ENCODE measurements at regions of chr1 and their contacts with region 1.

Region 1: GRCh38 chr1:228393248-228393699 is 13.4 kb downstream of the TRIM11 start:
- H3K4me3 Mint-ChIP-seq: no peak overlapping the region
- H3K27ac Mint-ChIP-seq: no peak overlapping the region
- H3K4me1 Mint-ChIP-seq: no peaks in the 10 kb centered on the region
- H3K27me3 Mint-ChIP-seq: no peaks in the 10 kb centered on the region

Region 2: GRCh38 chr1:228131766-228132165 is 261.5 kb before region 1 on chr1:
- intact Hi-C with region 1: loop called (anchors 5 kb)
- H3K4me3 Mint-ChIP-seq: no peak overlapping the region
- H3K27ac Mint-ChIP-seq: no peak overlapping the region
- H3K4me1 Mint-ChIP-seq: peaks cover 6% of the 10 kb centered on the region
- H3K27me3 Mint-ChIP-seq: peaks cover 3% of the 10 kb centered on the region

Region 3: DNA sequence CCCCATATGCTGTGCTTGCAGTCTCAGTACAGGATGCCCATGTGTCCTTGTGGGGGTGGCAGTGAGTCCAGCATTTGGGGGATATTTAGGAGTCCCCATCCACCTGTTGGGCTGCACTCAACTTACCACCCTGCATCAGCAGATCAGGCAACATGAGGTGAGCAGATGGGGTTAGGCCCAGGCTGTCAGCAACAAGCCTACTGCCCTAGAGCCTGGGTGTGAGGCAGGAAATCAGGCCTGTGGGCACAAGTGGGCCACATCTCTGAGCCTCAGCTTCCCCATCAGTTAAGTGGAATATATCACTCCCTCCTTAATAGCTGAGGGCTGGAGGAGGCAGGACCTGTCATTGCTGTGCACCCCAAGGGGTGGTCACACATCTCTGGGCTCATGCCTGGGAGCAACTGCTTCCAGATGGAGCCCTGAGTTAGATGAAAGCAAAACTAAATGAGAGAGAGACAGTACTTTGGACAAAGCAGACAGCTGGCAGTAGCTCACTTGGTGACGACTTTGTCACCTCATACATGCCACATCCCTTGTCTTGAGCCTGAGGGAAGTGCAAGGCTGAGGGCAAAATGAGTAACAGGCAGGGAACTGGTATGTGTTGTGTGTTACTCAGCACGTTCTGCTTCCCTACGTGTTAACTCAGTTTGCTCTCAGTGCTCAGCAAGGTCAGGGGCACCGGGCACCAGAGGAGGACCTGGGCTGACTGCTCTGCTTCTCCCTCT is 35.1 kb before region 1 on chr1:
- intact Hi-C with region 1: no loop called
- H3K4me3 Mint-ChIP-seq: no peak overlapping the region
- H3K27ac Mint-ChIP-seq: no peak overlapping the region
- H3K4me1 Mint-ChIP-seq: no peaks in the 10 kb centered on the region
- H3K27me3 Mint-ChIP-seq: no peaks in the 10 kb centered on the region

Measured in dendritic cell treated with granulocyte-macrophage colony-stimulating factor and Interleukin-4, amounts not matched to agents 40 ng/mL and 50 ng/mL, for 4 days (primary cell).